Right ventricle myocardium inferior (tissue), 1 donor: ENCODE measurements at regions of chr2 and their contacts with region 1.

Region 1: GRCh38 chr2:97645695-97646629 is at the start of gene COX5B:
- DNase-seq: peak; percentile 100
- ATAC-seq: peak; percentile 99
- total RNA-seq, gene COX5B: 1,345 TPM

Region 2: DNA sequence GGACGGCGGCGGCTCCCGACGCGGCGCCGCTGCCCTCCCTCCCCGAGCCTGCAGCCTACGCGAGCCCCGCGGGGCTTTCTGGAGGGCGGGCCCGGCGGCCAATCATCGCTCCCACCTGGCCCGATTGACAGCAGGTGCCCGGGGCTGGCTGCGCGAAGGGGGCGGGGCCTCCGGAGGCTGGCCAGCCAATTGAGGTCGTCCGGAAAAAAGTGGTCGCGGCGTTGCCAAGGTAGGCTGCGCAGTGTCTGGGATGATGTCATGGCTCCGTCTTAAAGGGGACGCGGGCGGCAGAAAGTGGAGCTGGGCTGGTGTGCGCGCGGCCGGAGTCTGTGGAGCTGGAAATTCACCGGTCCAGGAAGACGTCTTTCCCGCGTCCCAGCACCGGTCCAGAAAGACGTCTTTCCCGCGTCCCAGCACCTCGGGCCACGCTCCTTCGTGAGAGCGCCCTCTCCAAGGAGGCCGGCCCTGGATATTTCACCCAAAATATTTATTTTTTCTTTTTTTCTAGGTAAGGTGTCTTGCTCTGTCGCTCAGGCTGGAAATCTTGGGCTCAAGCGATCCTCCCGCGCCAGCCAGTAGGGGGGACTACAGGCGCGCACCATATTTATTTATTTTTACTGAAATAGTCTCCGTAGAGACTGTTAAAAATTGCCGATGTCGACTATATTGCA is 18.1 kb after region 1 on chr2 and contains the start of gene ACTR1B:
- intact Hi-C with region 1: loop called (anchors 1 kb)
- DNase-seq: peak; percentile 98
- ATAC-seq: peak; percentile 95
- total RNA-seq, gene ACTR1B: 60.3 TPM